Gastrocnemius medialis (tissue), 4 donors: ENCODE measurements at regions of chr10 and their contacts with region 1.

Region 1: GRCh38 chr10:102280397-102281101 is 35.2 kb downstream of the GBF1 start:
- DNase-seq: peak; percentile 85 to 92
- ATAC-seq: peak; percentile 98
- H3K4me3 ChIP-seq: peak overlapping the region; percentile 37 to 54 (median 40)
- H3K27ac ChIP-seq: peak overlapping the region; percentile 85 to 94 (median 88)
- H3K4me1 ChIP-seq: peaks cover 70 to 71% of the 10 kb centered on the region in 2 donors
- H3K27me3 ChIP-seq: no peaks in the 10 kb centered on the region
- CTCF ChIP-seq: no peak
- POLR2A ChIP-seq: peak; percentile 48 to 78

Region 2: DNA sequence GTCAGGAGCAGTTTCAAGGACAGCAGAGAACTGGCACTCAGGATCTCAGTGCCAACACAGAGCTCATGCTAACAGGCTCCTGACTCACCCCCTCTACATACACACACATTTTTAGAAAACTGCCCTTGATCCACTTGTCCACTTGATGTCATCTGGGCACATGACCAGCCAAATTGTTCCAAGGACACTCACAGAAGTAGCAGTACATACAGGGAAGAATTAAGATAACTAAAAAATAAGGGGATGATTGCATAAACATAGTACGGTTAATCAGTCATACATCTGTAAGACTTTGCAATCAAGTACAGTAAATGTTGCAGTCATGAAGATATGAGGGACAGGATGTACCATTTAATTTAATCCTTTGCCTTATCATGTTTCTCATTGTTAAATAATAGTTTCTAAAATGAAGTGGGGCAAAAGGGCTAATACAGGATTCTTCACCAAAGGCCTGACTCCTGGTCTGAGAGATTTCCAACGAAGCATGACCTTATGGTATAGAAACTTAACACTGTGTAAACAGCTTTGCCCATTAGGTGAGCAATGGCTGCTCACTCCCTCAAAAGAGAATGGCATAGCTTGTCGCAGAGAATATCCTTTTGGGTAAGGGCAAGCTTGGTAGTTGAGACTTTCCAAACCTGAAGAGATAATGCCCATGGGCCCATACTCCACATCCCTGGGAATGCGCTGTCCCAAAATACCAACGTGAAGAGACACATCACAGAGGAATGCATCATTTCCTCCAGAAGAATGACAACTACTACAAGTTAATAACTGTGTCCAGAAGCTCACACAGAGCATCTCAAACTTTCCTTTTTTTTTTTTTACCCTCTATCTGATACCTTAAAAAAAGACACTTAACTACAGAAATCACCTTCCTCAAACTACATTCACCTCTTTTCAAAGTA is 318.7 kb before region 1 on chr10:
- in situ Hi-C with region 1: no loop called
- intact Hi-C with region 1: no loop called
- DNase-seq: peak; percentile 82 to 85
- ATAC-seq: peak; percentile 93 to 96
- H3K4me3 ChIP-seq: no peak overlapping the region
- H3K27ac ChIP-seq: peak overlapping the region; percentile 89 to 98 (median 93)
- H3K4me1 ChIP-seq: peaks cover 35 to 45% of the 10 kb centered on the region in 2 donors
- H3K27me3 ChIP-seq: no peaks in the 10 kb centered on the region
- CTCF ChIP-seq: peak in 1 of 5 experiments; percentile 20
- POLR2A ChIP-seq: no peak

Region 3: DNA sequence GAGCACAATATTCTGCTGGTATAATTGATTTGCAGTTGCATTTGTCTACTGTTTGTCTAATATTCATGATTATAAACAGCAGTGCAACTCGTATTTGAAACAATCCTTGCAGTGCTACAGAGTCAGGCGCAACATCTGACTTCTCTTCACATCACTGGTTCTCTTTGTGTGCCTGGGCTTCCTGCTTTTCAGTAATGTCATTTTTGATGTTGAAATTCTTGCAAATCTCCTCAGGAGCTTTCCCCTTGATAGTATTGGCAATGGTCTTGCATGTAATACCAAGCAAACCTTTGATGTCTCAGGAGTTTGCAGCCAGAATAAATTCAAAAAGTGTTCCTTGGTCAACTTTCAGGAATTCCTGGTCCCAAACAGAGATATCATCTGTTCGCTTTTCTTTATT is 195.2 kb before region 1 on chr10:
- in situ Hi-C with region 1: no loop called
- intact Hi-C with region 1: no loop called
- DNase-seq: no peak
- ATAC-seq: no peak
- H3K4me3 ChIP-seq: no peak overlapping the region
- H3K27ac ChIP-seq: no peak overlapping the region
- H3K4me1 ChIP-seq: no peaks in the 10 kb centered on the region
- H3K27me3 ChIP-seq: no peaks in the 10 kb centered on the region
- CTCF ChIP-seq: no peak
- POLR2A ChIP-seq: no peak

Region 4: GRCh38 chr10:102268375-102268888 is 12.1 kb before region 1 on chr10:
- in situ Hi-C with region 1: no loop called
- intact Hi-C with region 1: loop called (anchors 1 kb)
- DNase-seq: no peak
- ATAC-seq: peak in 1 of 2 donors; percentile 29
- H3K4me3 ChIP-seq: no peak overlapping the region
- H3K27ac ChIP-seq: peak overlapping the region; percentile 75 to 85 (median 83)
- H3K4me1 ChIP-seq: peaks cover 79 to 81% of the 10 kb centered on the region in 2 donors
- H3K27me3 ChIP-seq: no peaks in the 10 kb centered on the region
- CTCF ChIP-seq: no peak
- POLR2A ChIP-seq: no peak

Region 5: DNA sequence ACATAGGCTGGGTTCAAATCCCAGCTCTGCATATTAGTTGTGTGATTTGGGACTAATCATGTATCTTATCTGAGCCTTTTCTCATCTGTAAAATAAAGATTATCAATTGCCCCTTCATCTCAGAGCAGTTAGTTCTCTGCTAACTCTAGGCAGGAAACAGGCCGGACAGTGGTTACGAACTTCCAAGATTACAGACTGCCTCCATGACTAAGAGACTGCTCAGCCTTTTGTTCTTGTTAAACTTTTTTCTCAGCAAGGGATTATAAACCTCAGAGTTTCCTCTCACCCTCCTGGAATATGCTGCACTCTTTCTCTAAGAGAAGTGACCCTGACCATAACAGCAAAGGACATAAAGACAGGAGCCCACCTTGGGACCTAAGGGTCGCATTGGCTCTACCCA is 62.4 kb after region 1 on chr10:
- in situ Hi-C with region 1: no loop called
- intact Hi-C with region 1: no loop called
- DNase-seq: no peak
- ATAC-seq: no peak
- H3K4me3 ChIP-seq: no peak overlapping the region
- H3K27ac ChIP-seq: no peak overlapping the region
- H3K4me1 ChIP-seq: peaks cover 6 to 10% of the 10 kb centered on the region in 2 donors
- H3K27me3 ChIP-seq: no peaks in the 10 kb centered on the region
- CTCF ChIP-seq: no peak
- POLR2A ChIP-seq: no peak

Region 6: DNA sequence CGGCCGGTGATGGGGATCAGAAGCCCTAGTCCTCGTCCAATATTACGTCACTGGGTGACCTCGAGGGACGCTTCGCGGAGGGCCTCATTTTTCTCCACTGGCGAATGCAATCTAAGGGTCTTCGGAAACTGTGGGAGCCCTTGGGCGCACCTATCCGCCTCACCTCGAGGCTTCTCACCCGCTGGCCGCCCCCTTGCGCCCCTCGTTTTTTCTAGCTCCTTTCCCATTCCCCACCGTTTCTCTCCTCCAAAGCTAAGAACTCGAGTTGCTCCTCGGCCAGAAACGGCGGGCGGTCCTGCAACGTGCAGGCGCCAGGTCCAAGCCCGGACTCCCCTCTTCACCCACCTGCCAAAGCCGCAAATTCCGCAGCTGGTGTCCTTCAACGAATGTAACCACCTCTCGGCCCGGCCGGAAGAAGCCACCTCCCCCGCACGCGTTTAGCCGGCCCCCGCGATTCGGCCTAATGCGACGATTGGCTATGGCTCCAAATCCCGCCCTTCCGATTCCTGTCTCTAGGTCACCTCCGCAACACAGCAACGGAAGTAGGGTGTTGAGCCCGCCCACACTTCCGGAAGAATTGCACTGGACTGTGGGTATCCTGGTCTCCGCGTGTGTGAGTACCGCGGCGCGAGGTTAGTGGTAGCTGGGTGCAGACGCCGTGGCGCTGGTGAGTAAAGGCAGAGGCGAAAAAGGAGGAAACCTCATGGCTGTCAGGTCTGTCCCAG is 1115.7 kb after region 1 on chr10 and contains the starts of genes ATP5MK and PDCD11:
- in situ Hi-C with region 1: no loop called
- intact Hi-C with region 1: no loop called
- DNase-seq: peak; percentile 96 to 98
- ATAC-seq: peak; percentile 99 to 100
- H3K4me3 ChIP-seq: peak within 1 kb of the TSS; percentile 88 to 96 (median 94)
- H3K27ac ChIP-seq: peak within 1 kb of the TSS; percentile 91 to 97 (median 94)
- H3K4me1 ChIP-seq: peaks cover 39 to 43% of the 10 kb centered on the region in 2 donors
- H3K27me3 ChIP-seq: no peaks in the 10 kb centered on the region
- CTCF ChIP-seq: peak in 2 of 5 experiments; percentile 12 to 22
- POLR2A ChIP-seq: peak; percentile 65 to 78
- total RNA-seq, gene ATP5MK: 436 to 724 (median 552) TPM
- total RNA-seq, gene PDCD11: 16.7 to 22.7 (median 19.5) TPM